OCI-LY7 (cell line): ENCODE measurements at regions of chr1 and their contacts with region 1.

Region 1: DNA sequence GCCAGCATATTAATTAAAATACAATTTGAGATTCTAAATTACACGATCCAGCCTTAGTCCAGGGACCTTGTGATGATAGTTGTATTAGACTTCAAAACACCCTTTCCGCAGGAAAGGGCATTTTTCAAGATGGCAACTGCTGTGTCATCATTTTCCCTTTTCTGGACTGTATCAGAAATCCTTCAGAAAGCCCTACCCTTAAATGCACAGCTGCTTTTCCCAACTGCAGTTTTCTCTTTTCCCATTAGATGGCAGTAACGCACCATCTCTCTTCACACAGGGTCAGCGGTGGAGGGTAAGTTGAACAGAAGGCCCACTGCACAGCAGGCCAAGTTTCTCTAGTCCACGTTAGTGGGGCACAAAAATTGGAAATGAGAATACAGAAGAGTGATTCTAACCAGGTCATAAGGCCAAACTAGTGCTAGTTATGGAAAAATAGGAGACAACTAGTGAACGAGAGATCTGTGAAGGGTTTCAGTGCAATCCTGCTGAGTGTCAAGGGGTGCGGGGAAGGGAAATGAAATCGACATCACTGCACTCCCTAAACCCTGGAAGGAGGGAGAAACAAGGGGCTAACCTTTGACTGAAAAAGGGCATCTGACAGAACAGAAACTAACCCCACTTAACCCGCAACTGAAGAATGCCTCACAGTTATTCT is 22.1 kb upstream of the TDRD10 start:
- DNase-seq: peak; percentile 78
- H3K4me3 ChIP-seq: no peak overlapping the region
- H3K27ac ChIP-seq: no peak overlapping the region
- H3K4me1 ChIP-seq: peaks cover 22% of the 10 kb centered on the region
- CTCF ChIP-seq: peak; percentile 99

Region 2: DNA sequence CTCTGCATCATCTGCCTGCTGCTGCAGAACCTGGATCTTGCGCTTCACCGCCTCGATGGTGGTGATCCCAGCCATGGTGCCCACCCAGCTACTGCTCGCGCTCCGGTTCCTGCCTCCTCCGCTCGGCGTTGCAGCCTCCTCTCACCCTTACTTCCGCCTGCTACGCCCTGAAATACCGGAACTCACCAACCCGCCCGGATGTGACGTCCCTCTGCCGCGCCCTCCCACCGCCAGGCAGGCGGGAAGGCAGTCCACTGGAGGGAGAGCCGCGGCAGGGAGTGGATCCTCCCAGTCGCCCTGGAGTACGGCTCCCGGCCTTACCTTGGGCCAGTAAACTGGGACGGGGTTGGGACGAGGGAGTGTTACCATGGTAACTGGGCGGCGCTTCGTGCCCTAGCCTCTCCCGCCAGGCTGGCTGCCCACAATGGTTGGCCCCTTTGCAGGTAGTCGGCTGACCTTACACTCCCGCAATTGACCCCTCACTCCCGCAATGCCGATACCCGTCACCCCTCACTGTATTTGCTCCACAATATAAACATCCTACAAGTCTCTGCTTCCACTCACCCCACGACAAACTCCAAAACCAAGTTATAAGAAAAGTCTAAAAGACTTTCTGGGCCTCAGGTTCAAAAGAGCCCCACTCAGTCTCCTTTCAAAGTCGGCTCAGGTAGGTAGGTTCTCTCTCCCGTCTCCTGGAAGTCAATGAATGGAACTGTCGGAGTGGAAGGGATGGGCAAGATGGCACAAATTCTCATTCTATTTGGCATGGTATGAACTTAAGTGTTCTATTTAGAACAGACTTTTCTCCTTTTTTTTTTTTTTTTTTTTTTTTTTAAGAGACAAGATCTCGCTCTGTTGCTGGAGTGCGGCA is 296.6 kb before region 1 on chr1:
- CTCF ChIA-PET with region 1: no interaction called
- POLR2A ChIA-PET with region 1: interaction called, 3 read pairs
- intact Hi-C with region 1: loop called (anchors 10 kb)
- DNase-seq: peak; percentile 94
- H3K4me3 ChIP-seq: peak overlapping the region; percentile 86
- H3K27ac ChIP-seq: peak overlapping the region; percentile 83
- H3K4me1 ChIP-seq: peaks cover 33% of the 10 kb centered on the region
- CTCF ChIP-seq: no peak

Region 3: DNA sequence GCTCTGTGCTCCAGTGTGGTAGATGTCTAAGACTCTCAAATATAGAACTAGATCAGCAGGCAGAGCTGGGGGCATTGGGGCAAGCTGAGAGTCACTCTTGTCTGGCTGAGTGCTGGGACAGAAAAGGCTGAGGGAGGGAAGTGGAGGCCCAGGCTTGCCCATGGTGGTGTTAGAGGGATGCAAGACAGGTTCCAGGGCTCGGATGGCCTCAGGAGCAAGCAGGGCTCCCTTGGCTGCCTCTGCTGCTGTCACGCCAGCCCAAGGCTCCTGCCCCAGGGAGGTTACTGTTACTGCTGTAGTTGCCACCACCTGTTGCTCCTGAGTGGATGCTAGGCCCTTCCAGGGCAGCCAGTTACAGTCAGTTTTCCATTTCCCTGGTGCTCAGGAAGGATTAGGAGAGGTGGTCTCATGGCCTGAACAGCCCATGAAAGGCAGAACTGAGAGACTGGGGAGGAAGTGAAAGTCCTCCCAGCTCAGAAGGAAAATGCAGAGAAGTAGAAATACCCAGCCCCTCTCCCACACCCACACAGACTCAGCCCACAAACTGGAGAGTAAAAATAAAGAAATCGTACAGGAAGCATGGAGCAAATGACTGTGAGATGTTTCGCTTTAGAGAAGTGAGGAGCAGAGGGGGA is 72.8 kb before region 1 on chr1:
- CTCF ChIA-PET with region 1: interaction called, 3 read pairs
- POLR2A ChIA-PET with region 1: no interaction called
- intact Hi-C with region 1: loop called (anchors 1 kb)
- DNase-seq: peak; percentile 63
- H3K4me3 ChIP-seq: peak overlapping the region; percentile 36
- H3K27ac ChIP-seq: peak overlapping the region; percentile 24
- H3K4me1 ChIP-seq: peaks cover 37% of the 10 kb centered on the region
- CTCF ChIP-seq: no peak

Region 4: GRCh38 chr1:154546264-154547063 is 66.6 kb after region 1 on chr1:
- CTCF ChIA-PET with region 1: interaction called, 17 read pairs
- POLR2A ChIA-PET with region 1: no interaction called
- intact Hi-C with region 1: loop called (anchors 1 kb)
- DNase-seq: peak; percentile 72
- H3K4me3 ChIP-seq: no peak overlapping the region
- H3K27ac ChIP-seq: no peak overlapping the region
- H3K4me1 ChIP-seq: no peaks in the 10 kb centered on the region
- CTCF ChIP-seq: peak; percentile 81

Region 5: GRCh38 chr1:154589780-154590179 is 109.9 kb after region 1 on chr1:
- CTCF ChIA-PET with region 1: no interaction called
- POLR2A ChIA-PET with region 1: no interaction called
- intact Hi-C with region 1: no loop called
- DNase-seq: no peak
- H3K4me3 ChIP-seq: no peak overlapping the region
- H3K27ac ChIP-seq: no peak overlapping the region
- H3K4me1 ChIP-seq: peaks cover 7% of the 10 kb centered on the region
- CTCF ChIP-seq: no peak

Region 6: GRCh38 chr1:154669464-154670282 is 189.8 kb after region 1 on chr1:
- CTCF ChIA-PET with region 1: no interaction called
- POLR2A ChIA-PET with region 1: no interaction called
- intact Hi-C with region 1: loop called (anchors 2 kb)
- DNase-seq: peak; percentile 89
- H3K4me3 ChIP-seq: no peak overlapping the region
- H3K27ac ChIP-seq: no peak overlapping the region
- H3K4me1 ChIP-seq: peaks cover 8% of the 10 kb centered on the region
- CTCF ChIP-seq: peak; percentile 97

Region 7: GRCh38 chr1:154878371-154879022 is 398.6 kb after region 1 on chr1:
- CTCF ChIA-PET with region 1: no interaction called
- POLR2A ChIA-PET with region 1: no interaction called
- intact Hi-C with region 1: loop called (anchors 5 kb)
- DNase-seq: peak; percentile 83
- H3K4me3 ChIP-seq: no peak overlapping the region
- H3K27ac ChIP-seq: no peak overlapping the region
- H3K4me1 ChIP-seq: peaks cover 3% of the 10 kb centered on the region
- CTCF ChIP-seq: peak; percentile 96